ENCODE measurements at regions of chr17 and their contacts with region 1.

Region 1: GRCh38 chr17:45385331-45385997 is 47.2 kb downstream of the ARHGAP27 start:
- DNase-seq: peak; percentile 96
- ATAC-seq: peak; percentile 96

Region 2: GRCh38 chr17:43745541-43745940 is 1639.9 kb before region 1 on chr17:
- intact Hi-C with region 1: no loop called
- DNase-seq: no peak
- ATAC-seq: no peak

Region 3: DNA sequence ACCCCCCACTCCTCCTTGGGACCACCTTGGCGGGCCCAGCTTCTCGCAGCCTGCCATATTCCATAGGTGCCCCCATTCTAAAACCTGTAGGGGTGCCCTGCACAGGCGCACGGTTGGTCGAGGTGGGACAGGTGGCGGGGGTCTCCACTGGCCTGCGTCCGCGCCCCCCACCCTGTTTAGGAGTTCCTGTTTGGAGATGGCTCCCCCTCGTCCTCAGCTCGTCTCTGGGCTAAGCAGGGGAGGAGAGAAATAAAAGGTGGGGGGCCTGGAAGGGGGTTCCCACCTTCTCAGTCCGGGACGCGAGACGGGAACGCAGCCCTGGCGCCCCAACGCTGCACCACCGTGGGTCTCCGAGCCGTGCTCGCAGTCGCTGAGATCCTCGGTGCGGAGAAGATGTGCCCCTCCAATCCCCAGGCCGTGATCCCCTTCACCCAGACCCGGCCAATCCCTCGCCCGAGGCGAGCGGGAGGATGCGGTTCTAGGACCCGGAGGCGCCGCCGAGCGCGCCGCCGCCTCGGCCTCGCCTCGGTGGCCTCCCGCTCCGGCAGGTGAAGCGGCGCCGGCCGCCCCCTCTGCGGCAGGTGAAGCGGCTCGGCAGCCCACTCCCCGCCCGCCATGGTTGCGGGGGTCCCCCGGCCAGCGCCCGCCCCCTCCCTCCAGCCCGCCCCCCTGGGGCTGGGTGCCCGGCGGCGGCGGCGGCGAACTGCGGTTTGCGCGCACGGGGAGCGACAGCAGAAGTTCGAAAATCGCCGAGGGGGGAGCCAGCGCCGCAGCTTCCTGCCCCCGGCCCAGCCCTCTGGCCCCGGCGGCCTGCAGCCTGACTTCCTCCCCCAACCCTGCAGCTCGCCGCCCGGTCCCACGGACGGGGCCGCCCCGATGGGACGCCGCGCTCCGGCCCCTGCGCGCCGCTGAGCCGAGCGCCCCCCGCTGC is 164.1 kb before region 1 on chr17 and contains the start of gene FMNL1:
- intact Hi-C with region 1: loop called (anchors 5 kb)
- DNase-seq: peak; percentile 77
- ATAC-seq: no peak
- total RNA-seq, gene FMNL1: 39.6 TPM

Region 4: DNA sequence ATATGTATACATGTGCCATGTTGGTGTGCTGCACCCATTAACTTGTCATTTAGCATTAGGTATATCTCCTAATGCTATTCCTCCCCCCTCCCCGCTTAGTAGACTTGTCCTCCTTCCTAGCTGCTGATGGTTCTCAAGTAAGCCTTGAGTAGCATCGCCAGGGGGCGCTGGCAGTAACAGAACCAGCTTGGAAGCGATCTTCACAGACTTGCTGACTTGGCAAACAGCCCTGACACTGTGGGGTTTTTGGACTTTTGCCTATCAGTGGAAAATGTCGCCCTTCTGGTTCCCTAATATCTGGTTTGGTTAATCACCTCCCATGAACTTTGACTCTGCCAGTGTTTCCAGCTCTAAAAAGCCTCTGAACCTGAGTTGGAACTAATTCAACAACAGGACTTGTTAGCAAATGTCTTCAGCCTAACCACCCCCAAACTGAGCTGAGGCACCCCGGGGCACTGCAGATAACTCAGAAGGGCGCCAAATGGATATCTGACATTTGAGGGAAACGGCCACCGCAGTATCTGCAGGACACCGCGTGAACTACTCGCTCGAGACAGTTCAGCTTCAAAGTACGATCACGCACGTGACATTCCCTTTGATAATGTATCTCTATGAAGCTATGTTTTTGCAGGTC is 108.1 kb before region 1 on chr17:
- intact Hi-C with region 1: loop called (anchors 2 kb)
- DNase-seq: peak; percentile 95
- ATAC-seq: peak; percentile 85